ENCODE measurements at regions of chr15 and their contacts with region 1.

Region 1: GRCh38 chr15:68517285-68517761 is 61.5 kb upstream of the CORO2B start:
- DNase-seq: no peak
- H3K4me3 ChIP-seq: no peak overlapping the region
- H3K27ac ChIP-seq: no peak overlapping the region
- H3K4me1 ChIP-seq: no peaks in the 10 kb centered on the region
- H3K27me3 ChIP-seq: peaks cover 6% of the 10 kb centered on the region
- CTCF ChIP-seq: no peak

Region 2: DNA sequence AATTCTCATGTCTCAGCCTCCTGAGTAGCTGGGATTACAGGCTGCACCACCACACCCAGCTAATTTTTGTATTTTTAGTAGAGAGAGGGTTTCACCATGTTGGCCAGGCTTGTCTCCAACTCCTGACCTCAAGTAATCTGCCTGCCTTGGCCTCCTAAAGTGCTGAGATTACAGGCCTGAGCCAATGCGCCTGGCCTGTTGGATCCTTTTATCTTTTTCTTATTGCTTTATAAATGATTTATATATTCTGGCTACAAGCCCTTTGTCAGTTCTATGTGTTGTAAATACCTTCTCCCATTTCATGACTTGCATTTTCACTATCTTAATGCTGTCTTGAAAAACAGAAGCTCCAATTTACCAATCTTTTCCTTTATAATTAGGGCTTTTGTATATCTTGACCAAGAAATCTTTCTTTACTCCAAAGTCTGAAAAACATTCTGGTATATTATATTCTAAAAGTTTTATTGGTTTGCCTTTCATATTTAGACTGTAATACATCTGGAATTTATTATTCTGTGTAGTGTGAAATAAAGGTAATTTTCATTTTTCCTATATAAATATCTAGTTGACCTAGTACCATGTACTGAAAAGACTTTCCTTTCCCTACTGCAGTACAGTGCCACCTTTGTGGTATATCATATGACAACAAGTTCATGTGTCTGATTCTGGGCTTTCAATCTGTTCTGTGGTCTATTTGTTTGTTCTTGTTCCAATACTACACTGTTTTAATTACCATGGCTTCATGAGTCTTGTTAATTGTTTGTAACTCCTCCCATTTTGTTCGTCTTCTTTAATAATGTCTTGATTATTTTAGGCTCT is 624.6 kb before region 1 on chr15:
- CTCF ChIA-PET with region 1: no interaction called
- POLR2A ChIA-PET with region 1: no interaction called
- intact Hi-C with region 1: no loop called
- DNase-seq: no peak
- H3K4me3 ChIP-seq: no peak overlapping the region
- H3K27ac ChIP-seq: no peak overlapping the region
- H3K4me1 ChIP-seq: no peaks in the 10 kb centered on the region
- H3K27me3 ChIP-seq: no peaks in the 10 kb centered on the region
- CTCF ChIP-seq: no peak

Region 3: GRCh38 chr15:68543165-68544008 is 26.1 kb after region 1 on chr15:
- CTCF ChIA-PET with region 1: no interaction called
- POLR2A ChIA-PET with region 1: no interaction called
- intact Hi-C with region 1: loop called (anchors 1 kb)
- DNase-seq: no peak
- H3K4me3 ChIP-seq: no peak overlapping the region
- H3K27ac ChIP-seq: no peak overlapping the region
- H3K4me1 ChIP-seq: no peaks in the 10 kb centered on the region
- H3K27me3 ChIP-seq: no peaks in the 10 kb centered on the region
- CTCF ChIP-seq: no peak

Region 4: GRCh38 chr15:69337133-69337532 is 819.8 kb after region 1 on chr15:
- CTCF ChIA-PET with region 1: no interaction called
- POLR2A ChIA-PET with region 1: no interaction called
- intact Hi-C with region 1: no loop called
- DNase-seq: peak in 1 of 2 experiments; percentile 41
- H3K4me3 ChIP-seq: no peak overlapping the region
- H3K27ac ChIP-seq: no peak overlapping the region
- H3K4me1 ChIP-seq: peaks cover 8% of the 10 kb centered on the region; the same call in 1 of the 2 replicates
- H3K27me3 ChIP-seq: no peaks in the 10 kb centered on the region
- CTCF ChIP-seq: no peak

Measured in PC-9 (cell line).